ENCODE measurements at regions of chr5 and their contacts with region 1.

Region 1: DNA sequence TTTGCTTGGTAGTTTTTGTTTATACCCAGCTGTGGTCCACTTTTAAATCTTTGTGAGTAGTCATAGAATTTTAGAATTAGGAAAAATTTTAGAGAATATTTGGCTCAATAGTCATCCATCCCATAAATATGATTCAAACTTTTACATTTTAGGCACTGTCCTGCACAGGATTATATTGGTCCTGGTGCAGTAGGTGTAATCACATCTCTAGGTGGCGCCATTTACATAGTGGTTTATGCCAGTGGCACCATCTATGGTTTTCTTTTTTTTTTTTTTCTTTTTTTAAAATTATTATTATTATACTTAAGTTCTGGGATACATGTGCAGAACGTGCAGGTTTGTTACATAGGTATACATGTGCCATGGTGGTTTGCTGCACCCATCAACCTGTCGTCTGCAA is 260.7 kb upstream of the KCNN2 start:
- DNase-seq: no peak
- H3K4me3 ChIP-seq: no peak overlapping the region
- H3K27me3 ChIP-seq: no peaks in the 10 kb centered on the region
- CTCF ChIP-seq: peak; percentile 65

Region 2: DNA sequence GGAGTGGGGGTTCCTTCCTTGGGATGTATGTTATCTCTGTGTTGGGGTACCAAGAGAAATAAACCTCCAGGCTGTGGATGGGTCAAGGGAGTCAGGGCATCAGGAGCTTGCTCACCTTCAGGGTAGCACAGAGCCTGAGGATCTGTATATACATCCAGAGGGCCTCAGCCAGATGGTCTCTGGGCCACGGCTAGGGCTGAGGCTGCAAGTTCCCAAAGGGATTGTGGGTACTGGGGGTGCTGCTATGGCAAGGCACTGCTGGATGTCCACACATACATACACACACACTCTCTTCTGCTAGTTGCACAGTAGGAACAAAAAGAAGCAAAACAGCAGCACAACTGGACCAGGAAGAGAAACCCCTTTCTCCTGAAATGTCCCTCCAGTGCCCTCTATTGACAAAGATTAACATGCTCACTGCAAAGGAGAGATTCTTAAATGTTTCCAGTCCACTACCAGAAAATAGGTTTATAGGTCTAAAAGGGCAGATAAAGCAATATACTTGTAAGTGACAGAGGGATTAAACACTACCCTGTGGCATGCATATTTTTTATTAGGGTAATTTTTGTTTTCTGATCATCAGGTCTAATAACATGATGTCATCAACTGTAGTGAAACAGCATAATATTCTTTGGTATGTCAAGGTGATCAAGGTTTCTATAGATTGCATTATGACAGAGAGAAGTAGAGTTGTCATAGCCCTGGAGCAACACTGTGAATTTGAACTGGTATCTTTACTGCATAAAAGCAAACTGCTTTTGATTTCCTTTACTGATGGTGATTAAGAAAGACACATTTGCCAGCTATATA is 204.5 kb after region 1 on chr5:
- CTCF ChIA-PET with region 1: interaction called, 16 read pairs
- POLR2A ChIA-PET with region 1: no interaction called
- DNase-seq: peak; percentile 12
- H3K4me3 ChIP-seq: no peak overlapping the region
- H3K27me3 ChIP-seq: no peaks in the 10 kb centered on the region
- CTCF ChIP-seq: peak; percentile 75

Region 3: DNA sequence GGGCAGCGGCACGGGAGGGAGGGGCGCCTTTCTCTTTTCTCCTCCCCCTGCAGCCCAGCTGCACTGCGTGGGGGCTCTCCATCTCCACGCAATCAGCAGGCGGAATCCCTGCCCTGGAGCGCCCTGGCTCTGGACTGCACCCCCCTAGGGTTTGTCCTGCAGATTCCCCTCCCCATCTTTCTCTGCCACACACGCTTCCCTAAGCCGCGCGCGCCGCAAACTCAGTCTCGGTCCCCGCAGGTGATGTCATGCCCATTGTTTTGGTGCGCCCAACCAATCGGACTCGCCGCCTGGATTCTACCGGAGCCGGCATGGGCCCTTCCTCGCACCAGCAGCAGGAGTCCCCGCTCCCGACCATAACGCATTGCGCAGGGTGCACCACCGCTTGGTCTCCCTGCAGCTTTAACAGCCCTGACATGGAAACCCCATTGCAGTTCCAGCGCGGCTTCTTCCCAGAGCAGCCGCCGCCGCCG is 260.6 kb after region 1 on chr5 and contains the start of gene KCNN2:
- CTCF ChIA-PET with region 1: interaction called, 21 read pairs
- POLR2A ChIA-PET with region 1: no interaction called
- DNase-seq: peak; percentile 59
- H3K4me3 ChIP-seq: peak within 1 kb of the TSS; percentile 62
- H3K27me3 ChIP-seq: no peaks in the 10 kb centered on the region; the same call in none of the 2 replicates
- CTCF ChIP-seq: no peak
- polyA plus RNA-seq, gene KCNN2: 4.6 and 5.1 TPM in 2 replicates

Measured in BJ (cell line).